K562 (cell line): ENCODE measurements at regions of chr1 and their contacts with region 1.

Region 1: GRCh38 chr1:1906185-1907097 is 8.6 kb upstream of the CALML6 start:
- DNase-seq: peak; percentile 79 to 94 (median 86)
- ATAC-seq: peak; percentile 88
- H3K4me3 ChIP-seq: no peak overlapping the region
- H3K27ac ChIP-seq: no peak overlapping the region
- H3K4me1 ChIP-seq: peaks cover 12 to 56% of the 10 kb centered on the region in 2 experiments; a peak in 4 of 5 replicates
- H3K27me3 ChIP-seq: no peaks in the 10 kb centered on the region
- CTCF ChIP-seq: peak; percentile 98 to 100 (median 99)
- EP300 ChIP-seq: no peak; the same call in 1 of the 2 replicates
- POLR2A ChIP-seq: no peak
- RAD21 ChIP-seq: peak; percentile 96 to 99

Region 2: DNA sequence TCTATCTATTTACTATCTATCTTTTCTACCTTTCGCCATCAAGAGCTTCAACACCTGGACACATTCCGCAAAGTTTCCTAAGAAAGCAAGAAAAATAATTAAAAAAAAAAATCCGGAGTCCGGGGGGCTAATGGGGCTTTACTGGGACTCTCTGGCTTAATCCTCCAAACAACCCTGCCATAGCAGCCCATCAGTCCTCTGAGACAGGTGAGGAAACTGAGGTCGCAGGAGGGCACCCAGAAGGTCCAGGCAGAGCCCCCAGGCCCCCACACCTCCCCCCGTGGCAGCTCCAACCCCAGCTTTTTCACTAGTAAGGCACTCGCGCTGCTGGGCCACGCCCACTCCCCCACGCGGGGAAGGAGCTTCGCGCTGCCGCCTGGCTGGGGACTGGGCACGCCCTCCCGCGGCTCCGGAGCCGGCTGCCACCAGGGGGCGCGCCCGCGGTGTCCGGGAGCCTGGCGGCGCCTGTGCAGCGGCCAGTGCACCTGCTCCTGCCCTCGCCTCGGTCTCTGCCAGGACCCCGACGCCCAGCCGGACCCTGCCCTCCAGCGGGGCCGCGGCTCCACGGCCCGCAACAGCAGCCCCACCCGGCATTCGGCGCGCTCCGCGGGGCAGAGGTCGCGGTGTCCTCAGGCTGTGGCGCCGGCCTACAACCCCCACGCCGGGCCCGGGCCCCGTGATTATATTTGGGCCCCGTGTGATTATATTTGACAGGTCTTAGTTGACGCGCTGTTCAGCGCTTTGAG is 1036.8 kb before region 1 on chr1:
- CTCF ChIA-PET with region 1: no interaction called
- POLR2A ChIA-PET with region 1: no interaction called
- in situ Hi-C with region 1: no loop called
- intact Hi-C with region 1: no loop called
- DNase-seq: peak; percentile 81 to 88 (median 85)
- ATAC-seq: peak; percentile 99
- H3K4me3 ChIP-seq: peak overlapping the region; percentile 18
- H3K27ac ChIP-seq: no peak overlapping the region
- H3K4me1 ChIP-seq: peaks cover 0 to 7% of the 10 kb centered on the region in 2 experiments; a peak in 3 of 5 replicates
- H3K27me3 ChIP-seq: peaks cover 15 to 35% of the 10 kb centered on the region in 2 experiments; a peak in 4 of 5 replicates
- CTCF ChIP-seq: peak; percentile 81 to 96 (median 83)
- EP300 ChIP-seq: no peak
- POLR2A ChIP-seq: no peak
- RAD21 ChIP-seq: peak; percentile 57 to 78

Region 3: DNA sequence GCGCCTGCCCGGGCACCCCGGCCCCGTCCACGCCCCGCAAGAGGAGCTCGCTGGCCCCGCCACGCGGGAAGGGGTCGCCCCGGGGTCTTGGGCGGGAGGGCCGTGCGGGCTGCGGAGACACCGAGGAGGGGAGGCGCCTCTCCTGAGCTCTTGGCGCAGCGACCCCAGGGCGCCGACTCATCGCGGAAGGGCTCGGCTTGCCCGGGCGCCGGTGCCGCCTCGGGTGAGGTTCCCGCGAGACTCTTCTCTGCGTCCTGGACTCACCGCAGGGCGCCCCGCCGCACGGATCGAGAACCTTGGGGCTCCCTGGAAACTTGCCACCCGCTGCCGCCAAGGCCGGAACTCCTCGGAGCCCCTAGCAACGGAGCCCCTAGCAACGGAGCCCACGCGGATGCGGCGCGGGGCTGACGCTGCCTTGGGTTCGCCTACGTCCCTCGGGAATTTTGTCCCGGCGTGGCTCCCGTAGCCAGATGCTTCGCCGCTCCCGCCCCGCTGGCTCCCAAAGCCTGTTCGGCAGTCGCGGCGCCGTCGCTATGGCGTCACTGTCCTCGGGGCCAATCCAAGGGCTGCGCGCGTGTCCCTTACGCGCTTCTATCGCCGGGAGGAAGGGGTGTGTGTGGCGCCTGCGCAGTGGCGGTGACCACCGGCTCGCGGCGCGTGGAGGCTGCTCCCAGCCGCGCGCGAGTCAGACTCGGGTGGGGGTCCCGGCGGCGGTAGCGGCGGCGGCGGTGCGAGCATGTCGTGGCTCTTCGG is 394.7 kb before region 1 on chr1 and contains the start of gene ATAD3A:
- CTCF ChIA-PET with region 1: no interaction called
- POLR2A ChIA-PET with region 1: no interaction called
- in situ Hi-C with region 1: no loop called
- intact Hi-C with region 1: loop called (anchors 5 kb)
- DNase-seq: peak; percentile 93 to 100 (median 96)
- ATAC-seq: peak; percentile 96
- H3K4me3 ChIP-seq: peak within 1 kb of the TSS; percentile 93
- H3K27ac ChIP-seq: peak within 1 kb of the TSS; percentile 91
- H3K4me1 ChIP-seq: peaks cover 0 to 19% of the 10 kb centered on the region in 2 experiments; a peak in 2 of 5 replicates
- H3K27me3 ChIP-seq: no peaks in the 10 kb centered on the region
- CTCF ChIP-seq: peak in 1 of 3 experiments; percentile 7; a peak in 1 of 6 replicates
- EP300 ChIP-seq: no peak
- POLR2A ChIP-seq: peak; percentile 92
- RAD21 ChIP-seq: no peak
- polyA plus RNA-seq, gene ATAD3A: 0.10 to 1.0 TPM

Region 4: GRCh38 chr1:1777950-1778662 is 128.3 kb before region 1 on chr1 and contains the start of gene NADK:
- CTCF ChIA-PET with region 1: interaction called, 3 read pairs
- POLR2A ChIA-PET with region 1: interaction called, 5 read pairs
- in situ Hi-C with region 1: no loop called
- intact Hi-C with region 1: loop called (anchors 2 kb)
- DNase-seq: peak; percentile 87 to 94 (median 92)
- ATAC-seq: peak; percentile 41
- H3K4me3 ChIP-seq: peak within 1 kb of the TSS; percentile 88
- H3K27ac ChIP-seq: peak within 1 kb of the TSS; percentile 94
- H3K4me1 ChIP-seq: peaks cover 65 to 73% of the 10 kb centered on the region in 2 experiments
- H3K27me3 ChIP-seq: no peaks in the 10 kb centered on the region
- CTCF ChIP-seq: peak in 2 of 3 experiments; percentile 3 to 23; a peak in 1 of 6 replicates
- EP300 ChIP-seq: no peak
- POLR2A ChIP-seq: no peak; the same call in 1 of the 2 replicates
- RAD21 ChIP-seq: peak in 1 of 2 experiments; percentile 34; a peak in 2 of 4 replicates
- polyA plus RNA-seq, gene NADK: 1.5 to 2.1 TPM

Region 5: DNA sequence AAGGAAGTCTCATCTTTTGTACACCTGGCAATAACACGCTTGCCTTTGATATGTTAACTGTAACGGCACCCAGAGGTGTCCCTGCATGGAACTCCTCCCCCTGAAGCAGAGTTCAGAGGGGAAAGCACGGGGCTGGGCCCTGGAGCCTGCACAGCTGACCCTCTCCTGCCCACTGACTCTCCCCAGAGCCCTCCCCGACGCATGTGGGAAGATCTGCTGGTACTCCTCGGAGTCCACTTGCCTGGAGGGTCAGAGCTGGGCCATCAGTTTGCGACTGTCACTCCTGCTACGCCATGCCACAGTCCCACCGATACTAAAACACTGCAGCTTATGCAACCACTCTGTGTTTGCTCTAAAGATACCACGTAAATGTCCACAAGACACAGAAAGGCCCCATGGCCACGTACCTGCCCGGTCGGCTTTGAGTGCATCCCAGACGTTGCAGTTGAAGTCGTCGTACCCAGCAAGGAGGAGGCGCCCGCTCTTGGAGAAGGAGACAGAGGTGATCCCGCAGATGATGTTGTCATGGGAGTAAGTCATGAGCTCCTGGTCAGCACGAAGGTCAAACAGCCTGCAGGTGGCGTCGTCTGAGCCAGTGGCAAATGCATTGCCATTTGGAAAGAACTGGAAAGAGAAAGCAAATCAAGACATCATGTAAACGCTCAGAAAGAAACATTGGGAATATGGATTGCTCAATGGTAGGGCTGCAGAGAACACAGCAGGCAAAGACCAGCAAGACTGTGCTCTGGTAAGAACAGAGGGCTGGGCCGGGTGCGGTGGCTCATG is 117.6 kb before region 1 on chr1:
- CTCF ChIA-PET with region 1: interaction called, 6 read pairs
- POLR2A ChIA-PET with region 1: interaction called, 9 read pairs
- in situ Hi-C with region 1: loop called (anchors 5 kb)
- intact Hi-C with region 1: no loop called
- DNase-seq: peak; percentile 35 to 57 (median 44)
- ATAC-seq: peak; percentile 65; the same call in 2 of the 3 replicates
- H3K4me3 ChIP-seq: no peak overlapping the region
- H3K27ac ChIP-seq: no peak overlapping the region
- H3K4me1 ChIP-seq: peaks cover 0 to 3% of the 10 kb centered on the region in 2 experiments; a peak in 1 of 5 replicates
- H3K27me3 ChIP-seq: no peaks in the 10 kb centered on the region; a peak in 1 of 5 replicates
- CTCF ChIP-seq: peak; percentile 55 to 73 (median 60)
- EP300 ChIP-seq: no peak
- POLR2A ChIP-seq: no peak
- RAD21 ChIP-seq: peak in 1 of 2 experiments; percentile 45; a peak in 2 of 4 replicates

Region 6: DNA sequence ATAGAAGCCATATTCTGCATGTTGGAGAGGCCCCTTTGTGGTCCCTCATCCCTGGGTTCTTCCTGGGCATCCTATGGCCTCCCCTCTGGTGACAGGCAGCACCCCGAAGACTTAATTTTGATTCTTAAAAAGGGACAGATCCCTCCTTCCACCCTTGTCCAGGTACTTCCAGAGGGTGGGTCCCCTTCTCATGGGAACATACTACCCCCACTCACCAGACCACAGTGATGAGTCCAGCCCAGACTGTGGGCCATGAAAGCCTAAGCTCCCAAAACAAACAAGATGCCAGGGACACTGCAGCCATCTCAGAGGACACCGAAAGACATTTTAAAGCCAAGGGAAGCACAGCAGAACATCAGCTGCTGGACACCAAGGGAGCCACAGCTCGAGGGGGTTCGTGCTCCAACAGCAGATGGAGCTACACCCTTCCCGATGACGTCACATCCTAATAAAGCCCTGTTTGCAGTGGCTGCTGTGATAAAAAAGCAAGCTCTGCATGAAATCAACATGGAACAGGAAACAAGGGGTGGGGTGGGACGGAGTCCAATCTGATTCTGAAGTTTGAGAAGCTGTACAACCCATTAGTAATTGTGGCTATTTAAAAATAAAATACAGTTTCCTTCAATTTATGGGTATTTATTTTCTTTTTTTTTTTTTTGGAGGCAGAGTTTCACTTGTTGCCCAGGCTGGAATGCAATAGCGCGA is 47.9 kb before region 1 on chr1:
- CTCF ChIA-PET with region 1: interaction called, 4 read pairs
- POLR2A ChIA-PET with region 1: interaction called, 3 read pairs
- in situ Hi-C with region 1: no loop called
- intact Hi-C with region 1: loop called (anchors 2 kb)
- DNase-seq: peak; percentile 70 to 89 (median 78)
- ATAC-seq: peak; percentile 88
- H3K4me3 ChIP-seq: no peak overlapping the region
- H3K27ac ChIP-seq: no peak overlapping the region; the same call in 2 of the 3 replicates
- H3K4me1 ChIP-seq: peaks cover 22 to 24% of the 10 kb centered on the region in 2 experiments; a peak in 4 of 5 replicates
- H3K27me3 ChIP-seq: no peaks in the 10 kb centered on the region
- CTCF ChIP-seq: peak; percentile 56 to 78 (median 68)
- EP300 ChIP-seq: peak; percentile 55; the same call in 1 of the 2 replicates
- POLR2A ChIP-seq: no peak
- RAD21 ChIP-seq: peak in 1 of 2 experiments; percentile 63; a peak in 3 of 4 replicates

Region 7: GRCh38 chr1:2019172-2019543 is 112.7 kb after region 1 on chr1 and contains the start of gene GABRD:
- CTCF ChIA-PET with region 1: no interaction called
- POLR2A ChIA-PET with region 1: no interaction called
- in situ Hi-C with region 1: no loop called
- intact Hi-C with region 1: no loop called
- DNase-seq: peak in 3 of 4 experiments; percentile 70 to 81 (median 79)
- ATAC-seq: peak; percentile 74
- H3K4me3 ChIP-seq: no peak within 1 kb of the TSS
- H3K27ac ChIP-seq: no peak within 1 kb of the TSS
- H3K4me1 ChIP-seq: peaks cover 0 to 15% of the 10 kb centered on the region in 2 experiments; a peak in 2 of 5 replicates
- H3K27me3 ChIP-seq: peaks cover 82 to 94% of the 10 kb centered on the region in 2 experiments
- CTCF ChIP-seq: no peak
- EP300 ChIP-seq: no peak
- POLR2A ChIP-seq: no peak
- RAD21 ChIP-seq: no peak
- polyA plus RNA-seq, gene GABRD: not detected